CD8-positive, alpha-beta memory T cell (primary cell): ENCODE measurements at regions of chr12 and their contacts with region 1.

Region 1: GRCh38 chr12:121802846-121803630 is 771 bp upstream of the SETD1B start:
- DNase-seq: peak; percentile 83 to 96 (median 91)
- H3K4me3 ChIP-seq: peak overlapping the region; percentile 83
- H3K4me3 Mint-ChIP-seq: peak overlapping the region; percentile 91 to 99 (median 95)
- H3K27ac ChIP-seq: peak overlapping the region; percentile 94
- H3K27ac Mint-ChIP-seq: peak overlapping the region; percentile 95 to 99 (median 97)
- H3K4me1 ChIP-seq: peaks cover 28% of the 10 kb centered on the region
- H3K4me1 Mint-ChIP-seq: peaks cover 31 to 42% (median 38%) of the 10 kb centered on the region in 3 donors
- H3K27me3 ChIP-seq: no peaks in the 10 kb centered on the region
- H3K27me3 Mint-ChIP-seq: peaks cover 0 to 1% of the 10 kb centered on the region in 2 donors

Region 2: GRCh38 chr12:121688966-121689365 is 114.1 kb before region 1 on chr12:
- CTCF ChIA-PET with region 1: no interaction called
- POLR2A ChIA-PET with region 1: interaction called, 11 read pairs
- DNase-seq: no peak
- H3K4me3 ChIP-seq: no peak overlapping the region
- H3K4me3 Mint-ChIP-seq: peak overlapping the region in 1 of 7 donors; percentile 49
- H3K27ac ChIP-seq: no peak overlapping the region
- H3K27ac Mint-ChIP-seq: peak overlapping the region in 2 of 8 donors; percentile 59 to 73
- H3K4me1 ChIP-seq: peaks cover 5% of the 10 kb centered on the region
- H3K4me1 Mint-ChIP-seq: peaks cover 7 to 10% (median 8%) of the 10 kb centered on the region in 3 donors
- H3K27me3 ChIP-seq: no peaks in the 10 kb centered on the region
- H3K27me3 Mint-ChIP-seq: peaks cover 0 to 2% of the 10 kb centered on the region in 2 donors

Region 3: GRCh38 chr12:121786441-121786825 is 16.6 kb before region 1 on chr12:
- CTCF ChIA-PET with region 1: interaction called, 1,908 read pairs
- POLR2A ChIA-PET with region 1: interaction called, 235 read pairs
- DNase-seq: peak; percentile 49 to 74 (median 62)
- H3K4me3 ChIP-seq: peak overlapping the region; percentile 47
- H3K4me3 Mint-ChIP-seq: peak overlapping the region; percentile 67 to 90 (median 88)
- H3K27ac ChIP-seq: peak overlapping the region; percentile 97
- H3K27ac Mint-ChIP-seq: peak overlapping the region; percentile 99 to 100 (median 100)
- H3K4me1 ChIP-seq: peaks cover 91% of the 10 kb centered on the region
- H3K4me1 Mint-ChIP-seq: peaks cover 83 to 96% (median 94%) of the 10 kb centered on the region in 3 donors
- H3K27me3 ChIP-seq: no peaks in the 10 kb centered on the region
- H3K27me3 Mint-ChIP-seq: peaks cover 0 to 4% of the 10 kb centered on the region in 2 donors

Region 4: GRCh38 chr12:121888478-121889266 is 85.6 kb after region 1 on chr12 and contains the start of gene PSMD9:
- CTCF ChIA-PET with region 1: interaction called, 9 read pairs
- POLR2A ChIA-PET with region 1: interaction called, 19 read pairs
- DNase-seq: peak; percentile 97 to 98 (median 98)
- H3K4me3 ChIP-seq: peak within 1 kb of the TSS; percentile 74
- H3K4me3 Mint-ChIP-seq: peak within 1 kb of the TSS; percentile 92 to 99 (median 99)
- H3K27ac ChIP-seq: peak within 1 kb of the TSS; percentile 88
- H3K27ac Mint-ChIP-seq: peak within 1 kb of the TSS; percentile 93 to 99 (median 99)
- H3K4me1 ChIP-seq: peaks cover 22% of the 10 kb centered on the region
- H3K4me1 Mint-ChIP-seq: peaks cover 28 to 51% (median 48%) of the 10 kb centered on the region in 3 donors
- H3K27me3 ChIP-seq: no peaks in the 10 kb centered on the region
- H3K27me3 Mint-ChIP-seq: peaks cover 0 to 3% of the 10 kb centered on the region in 2 donors
- total RNA-seq, gene PSMD9: 83.7 to 89.9 TPM